A673 (cell line): ENCODE measurements at regions of chr1 and their contacts with region 1.

Region 1: GRCh38 chr1:10948463-10948775 is 64.0 kb upstream of the TARDBP start:
- DNase-seq: no peak
- H3K4me3 ChIP-seq: no peak overlapping the region
- H3K27ac ChIP-seq: no peak overlapping the region
- H3K4me1 ChIP-seq: peaks cover 18% of the 10 kb centered on the region
- H3K27me3 ChIP-seq: no peaks in the 10 kb centered on the region
- CTCF ChIP-seq: no peak

Region 2: DNA sequence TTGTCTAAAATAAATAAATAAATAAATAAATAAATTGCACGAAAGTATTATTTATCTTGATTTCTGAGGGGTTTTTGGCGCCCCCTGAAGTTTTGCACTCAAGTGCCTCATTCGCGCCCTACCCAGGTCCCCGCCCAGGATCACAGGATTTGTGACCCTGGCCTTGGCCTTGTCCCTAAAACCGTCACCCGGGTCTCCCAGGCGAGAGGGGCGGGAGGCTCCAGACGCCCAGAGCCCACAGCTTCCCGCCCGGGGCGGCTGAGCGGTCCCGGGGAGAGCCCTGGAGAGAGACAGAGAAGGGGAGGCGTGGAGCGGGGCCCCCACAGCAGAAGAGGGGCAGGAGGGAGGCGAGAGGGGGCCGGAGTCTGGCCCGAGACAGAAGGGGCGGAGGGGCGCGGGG is 60.1 kb before region 1 on chr1:
- CTCF ChIA-PET with region 1: no interaction called
- POLR2A ChIA-PET with region 1: interaction called, 16 read pairs
- intact Hi-C with region 1: no loop called
- DNase-seq: peak; percentile 33
- H3K4me3 ChIP-seq: peak overlapping the region; percentile 40
- H3K27ac ChIP-seq: no peak overlapping the region
- H3K4me1 ChIP-seq: peaks cover 6% of the 10 kb centered on the region
- H3K27me3 ChIP-seq: no peaks in the 10 kb centered on the region
- CTCF ChIP-seq: peak; percentile 31; the same call in 1 of the 2 replicates

Region 3: DNA sequence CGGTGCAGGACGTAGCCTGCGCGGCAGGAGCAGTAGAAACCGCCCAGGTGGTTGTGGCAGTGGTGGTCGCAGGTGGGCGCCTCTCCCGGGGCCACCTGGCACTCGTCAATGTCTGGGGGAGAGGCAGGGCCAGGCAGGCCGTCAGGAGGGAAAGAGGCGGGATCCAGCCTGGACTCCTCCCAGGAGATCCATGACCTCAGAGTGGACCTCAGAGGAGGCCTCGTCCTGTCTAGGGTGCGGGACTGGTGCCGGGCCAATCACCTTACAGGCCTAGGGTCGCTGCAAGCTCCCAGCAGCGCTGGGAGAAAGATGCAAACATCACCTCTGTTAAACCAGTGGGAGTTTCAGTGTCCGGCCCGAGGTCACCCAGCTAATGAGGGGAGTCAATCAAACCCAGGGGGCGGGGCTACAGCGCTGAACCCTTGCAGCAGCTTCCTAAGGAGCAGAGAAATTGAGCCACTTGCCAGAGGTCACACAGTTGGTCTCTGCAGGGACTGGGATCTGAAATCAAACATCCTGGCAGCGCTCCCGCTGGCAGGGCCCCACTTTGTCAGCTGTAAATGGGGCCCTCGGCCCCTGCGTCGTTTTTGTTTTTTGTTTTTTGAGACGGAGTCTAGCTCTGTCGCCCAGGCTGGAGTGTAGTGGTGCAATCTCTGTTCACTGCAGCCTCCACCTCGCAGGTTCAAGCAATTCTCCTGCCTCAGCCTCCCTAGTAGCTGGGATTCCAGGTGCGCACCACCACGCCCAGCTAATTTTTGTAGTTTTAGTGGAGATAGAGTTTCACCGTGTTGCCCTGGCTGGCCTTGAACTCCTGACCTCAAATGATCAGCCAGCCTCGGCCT is 97.2 kb after region 1 on chr1:
- CTCF ChIA-PET with region 1: no interaction called
- POLR2A ChIA-PET with region 1: no interaction called
- intact Hi-C with region 1: no loop called
- DNase-seq: no peak
- H3K4me3 ChIP-seq: no peak overlapping the region
- H3K27ac ChIP-seq: no peak overlapping the region
- H3K4me1 ChIP-seq: no peaks in the 10 kb centered on the region
- H3K27me3 ChIP-seq: no peaks in the 10 kb centered on the region
- CTCF ChIP-seq: no peak

Region 4: DNA sequence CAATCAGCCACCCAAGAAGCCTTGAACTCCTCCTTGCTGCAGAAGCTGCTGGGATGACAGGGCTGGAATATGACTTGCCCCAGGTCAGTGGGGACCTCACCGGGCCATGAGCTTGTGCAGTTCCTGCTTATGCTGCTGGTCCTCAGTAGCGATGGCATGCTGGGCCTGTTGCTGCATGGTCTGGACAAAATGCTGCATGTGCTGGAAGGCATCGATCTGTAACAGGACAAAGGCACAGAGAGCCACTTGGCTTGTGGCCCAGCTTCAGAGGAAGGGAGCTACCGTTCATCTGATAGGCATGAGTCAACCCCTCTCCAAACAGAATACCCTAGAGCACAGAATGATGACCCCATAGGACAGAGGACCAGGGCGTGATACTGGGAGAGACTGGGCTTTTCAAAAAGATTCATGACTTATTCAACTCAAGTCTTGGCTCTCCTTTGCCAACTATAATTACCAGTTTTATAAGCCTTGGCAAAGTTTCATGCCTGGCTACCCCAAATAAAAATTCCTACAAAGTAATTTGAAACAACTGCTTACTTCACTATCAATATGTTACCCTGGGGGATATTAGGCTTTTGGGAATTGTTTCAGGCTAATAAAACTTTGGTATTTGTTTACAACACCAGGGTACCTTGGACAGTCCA is 186.0 kb after region 1 on chr1:
- CTCF ChIA-PET with region 1: no interaction called
- POLR2A ChIA-PET with region 1: no interaction called
- intact Hi-C with region 1: no loop called
- DNase-seq: peak; percentile 16
- H3K4me3 ChIP-seq: no peak overlapping the region
- H3K27ac ChIP-seq: no peak overlapping the region
- H3K4me1 ChIP-seq: no peaks in the 10 kb centered on the region
- H3K27me3 ChIP-seq: no peaks in the 10 kb centered on the region
- CTCF ChIP-seq: no peak

Region 5: DNA sequence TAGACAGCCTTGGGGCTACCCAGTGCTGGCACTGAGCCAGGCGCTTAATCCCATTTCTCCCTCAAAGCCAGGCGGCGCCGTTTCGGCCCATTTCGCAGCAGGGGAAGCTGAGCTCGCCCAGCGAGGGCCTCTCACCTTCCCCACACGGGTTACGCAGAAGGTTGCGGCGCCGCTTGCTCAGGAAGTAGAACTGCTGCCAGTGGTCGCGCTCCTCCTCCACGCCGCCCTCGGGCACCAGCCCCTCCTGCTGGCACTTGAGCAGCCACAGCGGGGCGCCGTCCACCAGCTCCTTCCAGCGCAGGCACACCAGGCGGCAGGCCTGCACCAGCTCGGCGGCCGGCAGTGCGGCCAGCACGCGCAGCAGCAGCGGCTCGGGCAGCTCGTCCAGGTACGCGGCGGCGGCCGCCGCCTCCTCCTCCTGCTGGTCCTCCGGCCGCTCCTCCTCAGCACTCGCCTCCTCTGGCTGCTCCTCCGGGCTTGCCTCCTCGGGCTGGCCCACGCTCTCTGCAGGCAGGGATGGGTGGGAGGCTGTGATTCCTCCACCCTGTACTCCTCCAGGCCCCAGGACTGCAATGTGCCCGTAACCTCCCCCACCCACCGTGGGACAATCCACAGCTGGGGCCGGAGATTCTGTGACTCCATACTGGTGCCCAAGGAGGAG is 702.0 kb after region 1 on chr1:
- CTCF ChIA-PET with region 1: no interaction called
- POLR2A ChIA-PET with region 1: no interaction called
- intact Hi-C with region 1: no loop called
- DNase-seq: peak; percentile 82
- H3K4me3 ChIP-seq: peak overlapping the region; percentile 17
- H3K27ac ChIP-seq: no peak overlapping the region
- H3K4me1 ChIP-seq: peaks cover 18% of the 10 kb centered on the region
- H3K27me3 ChIP-seq: no peaks in the 10 kb centered on the region
- CTCF ChIP-seq: peak; percentile 64